Mammary epithelial cell (primary cell): ENCODE measurements at regions of chr11 and their contacts with region 1.

Region 1: DNA sequence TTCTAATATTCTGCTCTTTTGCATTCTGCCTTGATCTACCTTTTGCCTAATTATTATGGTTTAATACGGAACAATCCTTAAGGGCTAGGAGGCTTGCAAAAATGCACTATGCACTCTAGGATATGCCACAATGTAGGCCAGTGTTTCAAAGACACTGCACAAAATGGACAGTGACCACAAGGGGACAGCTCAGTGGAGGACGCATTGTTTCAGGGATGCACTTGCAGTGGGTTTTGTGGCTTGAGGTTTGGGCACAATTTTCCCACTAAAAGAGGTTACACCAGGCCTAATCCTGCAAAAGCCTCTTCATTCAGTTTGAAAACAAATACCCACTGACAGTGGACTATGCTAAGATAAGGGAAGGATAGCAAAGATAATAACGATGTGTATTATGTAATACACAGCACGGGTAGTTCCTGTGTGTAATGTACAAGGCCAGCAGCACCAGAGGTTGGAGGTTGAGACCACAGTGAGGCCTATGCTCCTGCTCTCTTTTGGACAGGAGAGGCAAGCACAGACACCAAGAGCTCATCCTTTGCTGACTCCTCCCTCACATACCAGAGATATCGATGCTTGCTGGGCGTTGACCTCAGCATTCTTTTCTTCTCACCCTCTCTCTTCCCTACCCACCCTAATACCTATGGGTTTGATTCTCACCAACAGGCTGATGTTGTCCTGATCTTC is 12.7 kb downstream of the MAP6 start:
- DNase-seq: no peak
- H3K4me3 ChIP-seq: no peak overlapping the region
- H3K27ac ChIP-seq: no peak overlapping the region
- H3K4me1 ChIP-seq: peaks cover 41% of the 10 kb centered on the region
- H3K27me3 ChIP-seq: no peaks in the 10 kb centered on the region
- CTCF ChIP-seq: no peak

Region 2: GRCh38 chr11:75718419-75719339 is 62.5 kb after region 1 on chr11:
- CTCF ChIA-PET with region 1: interaction called, 15 read pairs
- dilution Hi-C with region 1: no loop called
- in situ Hi-C with region 1: no loop called
- intact Hi-C with region 1: no loop called
- DNase-seq: no peak
- H3K4me3 ChIP-seq: no peak overlapping the region
- H3K27ac ChIP-seq: no peak overlapping the region
- H3K4me1 ChIP-seq: peaks cover 4% of the 10 kb centered on the region
- H3K27me3 ChIP-seq: no peaks in the 10 kb centered on the region
- CTCF ChIP-seq: no peak

Region 3: DNA sequence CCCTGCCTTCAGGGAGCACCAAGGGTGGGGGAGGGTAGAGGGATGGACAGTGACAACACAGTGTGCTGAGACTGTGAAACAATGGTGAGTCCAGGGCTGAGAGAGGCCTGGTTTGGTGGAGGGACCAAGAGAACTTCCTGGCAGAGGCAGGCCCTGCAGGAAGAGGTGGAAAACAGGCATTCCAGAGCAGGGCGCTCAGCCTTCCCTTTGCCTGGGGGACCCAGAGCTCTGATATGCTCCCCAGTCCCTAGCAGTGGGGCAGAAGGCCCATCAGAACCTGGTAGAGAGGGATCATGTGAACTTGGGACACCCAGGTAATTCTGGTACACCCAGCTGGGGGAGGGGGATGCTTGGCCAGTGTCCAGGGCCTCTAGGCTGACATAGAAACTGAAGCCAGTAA is 141.6 kb after region 1 on chr11:
- CTCF ChIA-PET with region 1: no interaction called
- dilution Hi-C with region 1: no loop called
- in situ Hi-C with region 1: no loop called
- intact Hi-C with region 1: no loop called
- DNase-seq: no peak
- H3K4me3 ChIP-seq: no peak overlapping the region
- H3K27ac ChIP-seq: no peak overlapping the region
- H3K4me1 ChIP-seq: peaks cover 26% of the 10 kb centered on the region
- H3K27me3 ChIP-seq: no peaks in the 10 kb centered on the region
- CTCF ChIP-seq: no peak